ENCODE measurements at regions of chr19 and their contacts with region 1.

Region 1: GRCh38 chr19:34145741-34146202 is 26.5 kb upstream of the LSM14A start:
- DNase-seq: peak; percentile 20 to 48 (median 42)
- H3K4me3 ChIP-seq: no peak overlapping the region
- H3K27ac ChIP-seq: no peak overlapping the region
- H3K4me1 ChIP-seq: no peaks in the 10 kb centered on the region
- H3K27me3 ChIP-seq: no peaks in the 10 kb centered on the region
- CTCF ChIP-seq: peak; percentile 70 to 72 (median 72)
- EP300 ChIP-seq: no peak
- POLR2A ChIP-seq: no peak

Region 2: DNA sequence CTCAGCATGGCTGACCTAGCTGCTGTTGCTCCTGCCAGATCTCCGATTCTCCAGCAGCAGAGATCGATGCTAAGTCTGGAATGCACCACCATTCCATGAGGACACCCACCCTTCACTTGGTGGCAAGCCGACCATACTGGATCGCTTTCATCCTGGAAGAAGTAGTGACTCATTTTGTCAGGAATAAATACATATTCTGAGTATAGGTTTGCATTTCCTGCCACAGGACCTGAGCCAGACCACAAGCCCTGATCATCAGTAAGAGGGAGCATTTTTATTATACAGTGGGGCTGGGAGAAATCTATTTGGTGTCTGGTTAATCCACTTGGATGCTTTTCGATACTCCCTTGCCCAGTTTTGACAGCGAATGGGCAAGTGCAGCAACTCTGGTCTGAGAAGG is 360.0 kb before region 1 on chr19:
- intact Hi-C with region 1: loop called in 2 of 4 experiments (anchors 2 to 10 kb)
- DNase-seq: no peak
- H3K4me3 ChIP-seq: no peak overlapping the region
- H3K27ac ChIP-seq: no peak overlapping the region
- H3K4me1 ChIP-seq: peaks cover under 1% of the 10 kb centered on the region
- H3K27me3 ChIP-seq: no peaks in the 10 kb centered on the region
- CTCF ChIP-seq: no peak
- EP300 ChIP-seq: no peak
- POLR2A ChIP-seq: no peak